IMR-90 (cell line): ENCODE measurements at regions of chr5 and their contacts with region 1.

Region 1: GRCh38 chr5:134140530-134141201 is 26.2 kb downstream of the TCF7 start:
- DNase-seq: peak; percentile 71
- ATAC-seq: peak; percentile 82
- H3K4me3 ChIP-seq: no peak overlapping the region
- H3K27ac ChIP-seq: no peak overlapping the region
- H3K4me1 ChIP-seq: peaks cover 13% of the 10 kb centered on the region
- H3K27me3 ChIP-seq: no peaks in the 10 kb centered on the region
- CTCF ChIP-seq: peak; percentile 75
- POLR2A ChIP-seq: no peak
- RAD21 ChIP-seq: peak; percentile 70

Region 2: GRCh38 chr5:134101686-134102439 is 38.8 kb before region 1 on chr5:
- CTCF ChIA-PET with region 1: interaction called, 6 read pairs
- POLR2A ChIA-PET with region 1: no interaction called
- dilution Hi-C with region 1: no loop called
- in situ Hi-C with region 1: no loop called
- intact Hi-C with region 1: loop called (anchors 2 kb)
- DNase-seq: no peak
- ATAC-seq: peak; percentile 90
- H3K4me3 ChIP-seq: no peak overlapping the region
- H3K27ac ChIP-seq: no peak overlapping the region
- H3K4me1 ChIP-seq: peaks cover 4% of the 10 kb centered on the region
- H3K27me3 ChIP-seq: peaks cover 11% of the 10 kb centered on the region
- CTCF ChIP-seq: peak; percentile 74
- POLR2A ChIP-seq: no peak
- RAD21 ChIP-seq: peak; percentile 67

Region 3: GRCh38 chr5:134328619-134329018 is 188.0 kb after region 1 on chr5:
- CTCF ChIA-PET with region 1: no interaction called
- POLR2A ChIA-PET with region 1: no interaction called
- dilution Hi-C with region 1: no loop called
- in situ Hi-C with region 1: no loop called
- intact Hi-C with region 1: no loop called
- DNase-seq: no peak
- ATAC-seq: no peak
- H3K4me3 ChIP-seq: no peak overlapping the region
- H3K27ac ChIP-seq: no peak overlapping the region
- H3K4me1 ChIP-seq: no peaks in the 10 kb centered on the region
- H3K27me3 ChIP-seq: no peaks in the 10 kb centered on the region
- CTCF ChIP-seq: no peak
- POLR2A ChIP-seq: no peak
- RAD21 ChIP-seq: no peak